ENCODE measurements at regions of chr9 and their contacts with region 1.

Region 1: DNA sequence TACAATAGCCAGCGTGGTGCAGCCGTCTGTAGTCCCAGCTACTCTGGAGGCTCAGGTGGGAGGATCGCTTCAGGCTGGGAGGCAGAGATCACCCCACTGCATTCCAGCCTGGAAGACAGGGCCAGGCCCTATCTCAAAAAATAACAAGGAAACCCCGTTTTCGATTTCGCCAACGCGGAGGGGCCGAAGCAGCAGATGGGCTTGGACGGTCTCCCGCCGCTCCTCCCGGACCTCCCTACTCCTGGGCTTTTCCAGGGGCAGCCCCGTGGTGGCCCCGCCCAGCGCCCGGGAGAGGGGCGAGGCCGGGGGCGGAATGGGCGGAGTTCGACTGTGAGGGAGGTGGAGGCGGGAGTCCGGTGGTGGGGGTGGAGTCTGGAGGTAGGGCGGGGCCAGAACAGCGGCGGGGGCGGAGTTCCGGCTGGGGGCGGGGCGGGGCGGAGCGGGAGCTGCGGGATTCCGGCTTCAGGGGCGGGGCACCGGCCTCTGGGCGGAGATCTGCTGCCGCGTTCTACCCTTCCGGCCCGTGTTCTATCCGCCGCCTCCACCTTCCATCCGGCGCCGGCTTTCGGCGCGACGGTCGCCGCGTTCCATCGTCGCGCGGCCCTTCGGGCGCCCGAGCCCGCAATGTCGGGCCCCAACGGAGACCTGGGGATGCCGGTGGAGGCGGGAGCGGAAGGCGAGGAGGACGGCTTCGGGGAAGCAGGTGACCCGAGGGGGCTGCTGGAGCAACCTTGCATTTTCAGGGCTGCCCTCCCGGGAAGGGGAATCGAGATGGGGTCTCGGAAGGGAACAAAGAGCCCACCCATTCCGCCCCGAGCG is at the start of gene BBLN:
- DNase-seq: peak; percentile 98
- ATAC-seq: peak; percentile 91
- H3K4me3 Mint-ChIP-seq: peak within 1 kb of the TSS; percentile 74
- H3K27ac Mint-ChIP-seq: peak within 1 kb of the TSS; percentile 90
- H3K4me1 Mint-ChIP-seq: peaks cover 19% of the 10 kb centered on the region
- H3K27me3 Mint-ChIP-seq: no peaks in the 10 kb centered on the region
- total RNA-seq, gene BBLN: 64.4 to 68.5 TPM

Region 2: DNA sequence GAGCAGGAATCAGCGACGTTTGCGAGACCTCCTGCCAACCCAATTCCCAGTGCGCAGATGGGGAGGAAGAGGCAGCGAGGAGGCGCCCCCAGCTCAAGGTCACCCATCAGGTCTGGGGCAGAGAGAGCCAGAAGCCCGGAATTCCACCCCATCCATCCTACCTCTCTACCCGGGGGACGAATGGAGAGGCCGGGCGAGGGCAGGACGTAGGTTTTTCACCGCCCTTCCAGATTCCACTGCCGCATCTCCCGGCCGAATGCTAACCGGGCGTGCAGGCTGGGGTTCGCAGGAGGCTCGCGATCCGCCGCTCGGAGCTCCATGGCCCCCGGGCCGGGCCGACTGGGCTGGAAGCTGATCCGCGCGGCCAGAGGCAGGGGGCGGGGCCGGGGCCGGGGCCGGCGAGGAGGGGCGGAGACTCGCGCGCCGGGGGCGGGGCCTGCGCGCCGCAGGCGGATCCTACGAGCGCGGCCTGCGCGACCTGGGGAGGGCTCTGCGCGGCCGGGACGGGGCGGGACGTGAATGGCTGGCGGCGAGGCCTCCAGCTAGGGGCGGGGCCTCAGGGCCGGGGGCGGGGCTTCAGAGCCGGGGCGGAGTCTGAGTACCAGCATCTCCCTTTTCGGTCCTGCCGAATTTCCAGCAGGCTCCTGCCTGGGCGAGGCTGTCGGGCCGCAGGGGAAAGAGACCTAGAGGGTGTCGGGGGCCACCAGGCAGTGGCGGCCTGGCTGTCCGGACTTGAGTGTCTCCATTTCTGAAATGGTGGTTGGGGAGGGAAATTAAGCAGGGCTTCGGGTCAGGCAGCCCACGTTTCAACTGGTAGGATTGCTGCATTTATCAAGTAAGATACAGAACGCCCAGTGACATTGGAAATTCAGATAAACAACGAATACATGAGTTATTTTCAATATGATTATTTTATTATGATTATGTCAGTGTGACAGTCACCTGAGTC is 243.1 kb before region 1 on chr9 and contains the start of gene ST6GALNAC4:
- CTCF ChIA-PET with region 1: no interaction called
- POLR2A ChIA-PET with region 1: no interaction called
- intact Hi-C with region 1: loop called in 1 of 2 experiments (anchors 1 kb)
- DNase-seq: peak; percentile 98
- ATAC-seq: peak; percentile 96
- H3K4me3 Mint-ChIP-seq: peak within 1 kb of the TSS; percentile 76
- H3K27ac Mint-ChIP-seq: peak within 1 kb of the TSS; percentile 69
- H3K4me1 Mint-ChIP-seq: peaks cover 47% of the 10 kb centered on the region
- H3K27me3 Mint-ChIP-seq: no peaks in the 10 kb centered on the region
- total RNA-seq, gene ST6GALNAC4: 14.9 to 20.7 TPM

Region 3: GRCh38 chr9:128191406-128192046 is 31.5 kb after region 1 on chr9 and contains the start of gene CIZ1:
- CTCF ChIA-PET with region 1: interaction called, 4 read pairs
- POLR2A ChIA-PET with region 1: no interaction called
- intact Hi-C with region 1: loop called in 1 of 2 experiments (anchors 1 kb)
- DNase-seq: peak; percentile 84
- ATAC-seq: peak; percentile 82
- H3K4me3 Mint-ChIP-seq: peak within 1 kb of the TSS; percentile 87
- H3K27ac Mint-ChIP-seq: peak within 1 kb of the TSS; percentile 85
- H3K4me1 Mint-ChIP-seq: peaks cover 28% of the 10 kb centered on the region
- H3K27me3 Mint-ChIP-seq: no peaks in the 10 kb centered on the region
- total RNA-seq, gene CIZ1: 79.5 to 110 TPM

Region 4: DNA sequence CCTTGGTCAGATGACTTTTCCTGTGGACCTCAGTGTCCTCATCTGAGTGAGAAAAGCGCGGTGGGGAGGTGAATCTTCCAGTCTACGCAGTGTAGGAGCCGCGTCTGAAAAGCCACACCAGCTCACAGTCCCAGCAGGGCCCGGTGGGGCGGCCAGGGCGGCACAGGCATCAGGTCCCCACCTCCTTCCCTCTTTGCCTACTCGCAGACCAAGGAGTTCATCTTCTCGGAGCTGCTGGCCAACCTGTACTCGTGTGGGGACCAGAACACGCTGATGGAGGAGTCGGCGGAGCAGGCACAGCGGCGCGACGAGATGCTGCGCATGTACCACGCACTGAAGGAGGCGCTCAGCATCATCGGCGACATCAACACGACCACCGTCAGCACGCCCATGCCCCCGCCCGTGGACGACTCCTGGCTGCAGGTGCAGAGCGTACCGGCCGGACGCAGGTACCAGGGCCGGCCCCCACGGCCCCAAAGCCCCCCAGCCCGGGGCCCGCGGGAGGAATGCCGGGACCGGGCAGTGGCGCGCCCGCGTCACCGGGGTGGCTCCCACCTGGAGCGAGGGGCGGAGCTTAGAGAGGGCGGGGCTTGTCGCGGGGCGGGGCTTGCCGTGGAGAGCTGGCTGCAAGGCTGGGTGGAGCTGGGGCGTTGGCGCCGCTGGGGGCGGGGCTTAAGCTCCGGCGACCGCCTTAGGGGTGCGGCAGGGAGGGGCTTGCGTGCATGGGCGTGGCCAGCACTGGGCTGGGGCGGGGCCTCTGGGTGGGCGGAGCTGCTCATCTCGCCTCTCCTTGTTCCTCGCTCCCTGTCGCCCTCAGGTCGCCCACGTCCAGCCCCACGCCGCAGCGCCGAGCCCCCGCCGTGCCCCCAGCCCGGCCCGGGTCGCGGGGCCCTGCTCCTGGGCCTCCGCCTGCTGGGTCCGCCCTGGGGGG is 90.2 kb after region 1 on chr9:
- CTCF ChIA-PET with region 1: no interaction called
- POLR2A ChIA-PET with region 1: interaction called, 5 read pairs
- intact Hi-C with region 1: loop called in 1 of 2 experiments (anchors 1 kb)
- DNase-seq: peak; percentile 99
- ATAC-seq: peak; percentile 98
- H3K4me3 Mint-ChIP-seq: peak overlapping the region; percentile 78
- H3K27ac Mint-ChIP-seq: peak overlapping the region; percentile 42
- H3K4me1 Mint-ChIP-seq: peaks cover 7% of the 10 kb centered on the region
- H3K27me3 Mint-ChIP-seq: peaks cover 10% of the 10 kb centered on the region

Region 5: DNA sequence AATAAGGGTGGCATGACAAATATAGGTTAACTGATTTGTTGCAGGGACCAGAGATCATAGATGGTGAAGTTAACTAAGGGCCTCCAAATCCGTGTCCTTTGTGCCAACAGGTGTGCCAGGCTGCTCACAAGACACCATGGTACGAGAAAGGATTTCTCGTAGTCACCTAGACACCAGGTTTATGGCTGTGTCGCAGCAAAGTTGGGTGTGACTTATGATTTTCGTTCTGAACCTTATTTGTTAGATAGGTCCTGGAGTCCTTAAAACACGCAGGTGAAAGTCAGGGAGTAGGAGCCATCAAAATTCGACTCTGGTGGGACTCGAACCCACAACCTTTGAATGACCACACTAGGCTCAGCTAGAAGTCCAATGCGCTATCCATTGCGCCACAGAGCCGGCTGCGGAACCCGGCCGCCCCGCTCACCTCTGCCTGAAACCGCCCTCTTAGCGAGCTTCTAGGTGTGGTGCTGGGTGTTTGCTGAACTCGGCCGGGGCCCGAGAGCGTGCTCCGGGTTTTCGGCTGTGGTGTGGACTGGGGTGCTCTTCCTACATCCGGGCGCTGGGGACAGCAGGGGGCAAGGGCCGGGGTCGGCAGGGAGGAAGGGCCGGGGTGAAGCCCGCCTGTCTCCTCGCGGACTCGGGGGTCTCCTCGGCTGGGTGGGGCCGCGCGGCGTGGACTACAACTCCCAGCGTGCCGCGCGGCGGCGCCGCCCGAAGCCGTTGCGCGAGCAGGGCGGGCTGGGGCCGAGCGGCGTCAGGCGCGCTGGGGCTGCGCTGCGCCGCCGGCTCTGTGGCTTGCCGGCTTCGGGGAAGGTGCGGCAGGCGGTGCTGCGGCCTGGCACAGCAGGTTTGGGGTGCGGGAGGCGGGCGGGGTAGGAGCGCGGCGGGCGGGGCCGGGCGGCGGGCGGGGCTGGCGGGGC is 180.0 kb after region 1 on chr9 and contains the start of gene SLC27A4:
- CTCF ChIA-PET with region 1: interaction called, 4 read pairs
- POLR2A ChIA-PET with region 1: no interaction called
- intact Hi-C with region 1: loop called in 1 of 2 experiments (anchors 1 kb)
- DNase-seq: peak; percentile 88
- ATAC-seq: peak; percentile 93
- H3K4me3 Mint-ChIP-seq: peak within 1 kb of the TSS; percentile 88
- H3K27ac Mint-ChIP-seq: peak within 1 kb of the TSS; percentile 83
- H3K4me1 Mint-ChIP-seq: peaks cover 6% of the 10 kb centered on the region
- H3K27me3 Mint-ChIP-seq: no peaks in the 10 kb centered on the region
- total RNA-seq, gene SLC27A4: 8.4 to 10.2 TPM

Region 6: DNA sequence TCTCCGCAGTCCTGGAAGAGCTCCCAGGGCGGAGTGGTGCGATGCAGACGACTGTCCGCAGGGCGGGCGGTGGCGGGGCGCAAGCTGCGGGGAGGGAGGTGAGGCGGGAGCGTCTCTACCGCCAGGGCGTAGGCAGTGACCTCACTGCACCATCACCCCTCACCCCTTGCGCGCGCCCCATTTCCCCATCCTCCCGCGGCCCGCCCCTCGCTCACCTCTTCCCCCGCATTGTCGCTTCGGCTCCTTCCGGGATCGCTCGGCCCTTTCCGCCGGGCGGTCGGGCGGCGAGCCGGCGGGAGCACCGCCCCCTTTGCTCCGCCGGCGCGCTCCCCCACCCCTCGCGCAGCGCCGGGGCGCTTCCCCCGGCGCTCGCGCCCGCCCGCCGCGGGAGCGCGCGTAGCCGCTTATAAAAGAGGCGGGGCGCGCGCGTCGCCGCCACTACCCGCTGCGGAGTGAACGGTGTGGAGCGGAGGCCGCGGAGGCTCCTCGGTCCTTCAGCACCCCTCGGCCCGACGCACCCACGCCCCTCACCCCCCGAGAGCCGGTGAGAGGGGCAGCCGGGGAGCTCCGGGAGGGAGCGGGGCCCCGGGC is 392.3 kb after region 1 on chr9 and contains the start of gene SPTAN1:
- CTCF ChIA-PET with region 1: no interaction called
- POLR2A ChIA-PET with region 1: no interaction called
- intact Hi-C with region 1: loop called in 1 of 2 experiments (anchors 1 kb)
- DNase-seq: peak; percentile 98
- ATAC-seq: peak; percentile 78
- H3K4me3 Mint-ChIP-seq: no peak within 1 kb of the TSS
- H3K27ac Mint-ChIP-seq: peak within 1 kb of the TSS; percentile 97
- H3K4me1 Mint-ChIP-seq: peaks cover 34% of the 10 kb centered on the region
- H3K27me3 Mint-ChIP-seq: no peaks in the 10 kb centered on the region
- total RNA-seq, gene SPTAN1: 192 to 269 TPM

Region 7: DNA sequence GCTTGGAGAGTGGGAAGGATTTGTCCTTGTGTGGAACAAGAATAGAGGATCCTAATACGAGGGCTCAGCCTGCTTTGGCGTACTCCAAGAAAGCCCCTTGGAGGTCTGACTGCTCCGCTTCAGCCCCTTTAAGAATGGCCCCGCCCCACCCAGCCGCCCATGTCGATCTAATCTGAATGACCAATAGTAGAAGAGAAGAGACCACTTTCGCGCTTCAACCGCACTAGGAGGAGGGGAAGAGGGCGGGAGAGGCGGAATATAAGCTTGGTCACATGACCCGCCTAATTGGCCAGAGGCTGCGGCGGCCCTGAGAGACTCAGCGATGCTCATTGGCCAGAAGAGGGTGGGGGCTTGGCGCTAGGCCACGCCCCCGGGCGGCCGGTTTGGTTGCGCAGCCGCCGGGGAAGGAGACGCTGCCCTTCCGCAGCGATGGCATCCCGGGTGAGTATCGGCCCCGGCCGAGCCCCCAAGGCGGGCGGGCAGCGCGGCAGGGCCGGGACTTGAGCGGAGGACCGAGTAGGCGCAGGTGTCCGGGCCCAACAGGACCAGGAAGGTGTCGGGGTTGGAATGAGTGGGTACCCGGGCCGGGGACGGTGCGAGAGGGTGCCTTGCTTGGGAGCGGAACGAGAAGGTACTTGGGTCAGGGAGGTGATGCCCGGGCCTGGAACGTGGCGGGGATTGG is 876.4 kb after region 1 on chr9 and contains the start of gene MIGA2:
- CTCF ChIA-PET with region 1: no interaction called
- POLR2A ChIA-PET with region 1: no interaction called
- intact Hi-C with region 1: loop called in 1 of 2 experiments (anchors 1 kb)
- DNase-seq: peak; percentile 96
- ATAC-seq: peak; percentile 99
- H3K4me3 Mint-ChIP-seq: peak within 1 kb of the TSS; percentile 98
- H3K27ac Mint-ChIP-seq: peak within 1 kb of the TSS; percentile 83
- H3K4me1 Mint-ChIP-seq: peaks cover 27% of the 10 kb centered on the region
- H3K27me3 Mint-ChIP-seq: no peaks in the 10 kb centered on the region
- total RNA-seq, gene MIGA2: 15.7 to 25.8 TPM

Region 8: GRCh38 chr9:129696938-129697650 is 1537.1 kb after region 1 on chr9:
- CTCF ChIA-PET with region 1: no interaction called
- POLR2A ChIA-PET with region 1: no interaction called
- intact Hi-C with region 1: no loop called
- DNase-seq: peak; percentile 51
- ATAC-seq: peak; percentile 59
- H3K4me3 Mint-ChIP-seq: peak overlapping the region; percentile 62
- H3K27ac Mint-ChIP-seq: peak overlapping the region; percentile 86
- H3K4me1 Mint-ChIP-seq: peaks cover 10% of the 10 kb centered on the region
- H3K27me3 Mint-ChIP-seq: peaks cover 28% of the 10 kb centered on the region